ENCODE measurements at regions of chr12 and their contacts with region 1.

Region 1: DNA sequence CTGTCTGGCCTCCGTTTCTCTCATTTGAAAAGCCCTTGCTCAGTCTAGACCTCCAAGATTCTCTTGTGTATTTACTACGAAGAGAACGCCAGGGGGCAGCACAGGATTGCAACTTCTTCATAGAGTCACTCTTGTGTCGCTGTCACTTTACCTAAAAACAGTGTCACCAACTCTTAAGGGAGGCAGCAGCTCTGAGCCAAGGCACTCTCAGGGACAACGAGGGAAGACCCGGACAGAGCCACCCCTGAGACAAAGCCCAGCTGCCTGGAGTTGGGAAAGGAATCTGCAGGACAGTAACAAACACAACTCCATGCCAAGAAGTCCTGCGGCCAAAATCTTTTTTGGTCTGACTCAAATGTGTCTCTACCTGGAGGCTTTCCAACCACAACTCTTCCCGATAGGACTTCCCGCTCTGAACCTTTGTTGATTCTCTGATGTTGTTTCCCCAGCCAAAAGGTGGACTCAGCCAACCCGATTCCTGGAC is 9.6 kb upstream of the RPAP3 start:
- DNase-seq: peak; percentile 58
- H3K4me3 Mint-ChIP-seq: no peak overlapping the region
- H3K27ac Mint-ChIP-seq: no peak overlapping the region
- H3K4me1 Mint-ChIP-seq: peaks cover 29% of the 10 kb centered on the region
- H3K27me3 Mint-ChIP-seq: peaks cover 2% of the 10 kb centered on the region

Region 2: GRCh38 chr12:47679785-47680184 is 35.6 kb before region 1 on chr12:
- intact Hi-C with region 1: no loop called
- DNase-seq: no peak
- H3K4me3 Mint-ChIP-seq: no peak overlapping the region
- H3K27ac Mint-ChIP-seq: no peak overlapping the region
- H3K4me1 Mint-ChIP-seq: peaks cover 18% of the 10 kb centered on the region
- H3K27me3 Mint-ChIP-seq: no peaks in the 10 kb centered on the region

Region 3: GRCh38 chr12:47742253-47742825 is 26.9 kb after region 1 on chr12:
- intact Hi-C with region 1: loop called (anchors 1 kb)
- DNase-seq: peak; percentile 61
- H3K4me3 Mint-ChIP-seq: no peak overlapping the region
- H3K27ac Mint-ChIP-seq: no peak overlapping the region
- H3K4me1 Mint-ChIP-seq: peaks cover 6% of the 10 kb centered on the region
- H3K27me3 Mint-ChIP-seq: peaks cover 17% of the 10 kb centered on the region

Region 4: DNA sequence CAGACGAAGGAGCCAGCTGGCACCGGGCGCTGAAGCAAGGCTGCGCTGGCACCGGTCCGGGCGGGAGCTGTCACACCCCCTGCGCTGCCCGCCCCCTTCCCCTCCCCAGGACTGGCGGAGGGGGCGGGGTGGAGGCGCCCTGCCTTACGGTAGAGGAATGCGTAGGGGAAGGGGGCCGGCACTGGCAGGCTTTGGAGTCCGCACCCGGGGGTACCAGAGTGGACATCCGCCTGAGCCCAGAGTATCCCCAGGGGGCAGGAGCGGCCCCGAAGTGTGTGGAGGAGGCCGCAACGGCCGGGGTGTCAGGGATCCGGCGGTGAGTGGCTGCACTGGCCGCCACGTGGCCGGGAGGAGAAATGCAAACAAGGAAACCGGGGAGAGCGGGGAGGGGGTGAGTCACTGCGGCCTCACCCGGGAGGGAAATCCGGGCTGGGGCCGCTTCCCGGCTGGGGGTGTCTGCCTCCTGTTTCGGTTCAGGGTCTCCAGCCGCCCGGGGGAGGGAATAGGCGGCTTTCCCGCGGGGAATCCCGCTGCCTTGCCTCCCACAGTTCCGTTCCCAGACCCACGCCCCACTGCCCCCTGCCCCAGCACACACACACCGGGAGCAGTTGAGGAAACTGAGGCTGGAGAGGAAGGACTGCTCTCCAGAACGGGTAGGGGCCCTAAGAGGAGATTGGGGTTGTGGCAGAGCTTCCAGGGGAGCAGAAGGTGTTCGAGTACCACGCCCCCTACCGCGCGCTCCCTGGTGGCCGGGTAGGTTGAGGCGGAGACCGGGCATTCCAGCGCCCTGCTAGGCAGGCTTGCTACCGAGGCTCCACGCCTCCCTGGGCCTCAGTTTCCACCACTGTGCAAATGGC is 43.6 kb after region 1 on chr12 and contains the start of gene RAPGEF3:
- intact Hi-C with region 1: loop called (anchors 1 kb)
- DNase-seq: peak; percentile 58
- H3K4me3 Mint-ChIP-seq: peak within 1 kb of the TSS; percentile 75
- H3K27ac Mint-ChIP-seq: no peak within 1 kb of the TSS
- H3K4me1 Mint-ChIP-seq: peaks cover 56% of the 10 kb centered on the region
- H3K27me3 Mint-ChIP-seq: peaks cover 4% of the 10 kb centered on the region
- total RNA-seq, gene RAPGEF3: 4.7 and 6.5 TPM in 2 replicates

Region 5: GRCh38 chr12:47767216-47767724 is 51.8 kb after region 1 on chr12:
- intact Hi-C with region 1: loop called (anchors 1 kb)
- DNase-seq: peak; percentile 53
- H3K4me3 Mint-ChIP-seq: no peak overlapping the region
- H3K27ac Mint-ChIP-seq: no peak overlapping the region
- H3K4me1 Mint-ChIP-seq: peaks cover 3% of the 10 kb centered on the region
- H3K27me3 Mint-ChIP-seq: peaks cover 3% of the 10 kb centered on the region

Region 6: GRCh38 chr12:47779301-47779942 is 64.0 kb after region 1 on chr12:
- intact Hi-C with region 1: loop called (anchors 1 kb)
- DNase-seq: peak; percentile 84
- H3K4me3 Mint-ChIP-seq: no peak overlapping the region
- H3K27ac Mint-ChIP-seq: peak overlapping the region; percentile 89
- H3K4me1 Mint-ChIP-seq: peaks cover 50% of the 10 kb centered on the region
- H3K27me3 Mint-ChIP-seq: no peaks in the 10 kb centered on the region

Region 7: GRCh38 chr12:47837190-47838171 is 122.0 kb after region 1 on chr12:
- intact Hi-C with region 1: loop called (anchors 1 kb)
- DNase-seq: peak; percentile 41
- H3K4me3 Mint-ChIP-seq: no peak overlapping the region
- H3K27ac Mint-ChIP-seq: peak overlapping the region; percentile 67
- H3K4me1 Mint-ChIP-seq: peaks cover 84% of the 10 kb centered on the region
- H3K27me3 Mint-ChIP-seq: no peaks in the 10 kb centered on the region

Region 8: DNA sequence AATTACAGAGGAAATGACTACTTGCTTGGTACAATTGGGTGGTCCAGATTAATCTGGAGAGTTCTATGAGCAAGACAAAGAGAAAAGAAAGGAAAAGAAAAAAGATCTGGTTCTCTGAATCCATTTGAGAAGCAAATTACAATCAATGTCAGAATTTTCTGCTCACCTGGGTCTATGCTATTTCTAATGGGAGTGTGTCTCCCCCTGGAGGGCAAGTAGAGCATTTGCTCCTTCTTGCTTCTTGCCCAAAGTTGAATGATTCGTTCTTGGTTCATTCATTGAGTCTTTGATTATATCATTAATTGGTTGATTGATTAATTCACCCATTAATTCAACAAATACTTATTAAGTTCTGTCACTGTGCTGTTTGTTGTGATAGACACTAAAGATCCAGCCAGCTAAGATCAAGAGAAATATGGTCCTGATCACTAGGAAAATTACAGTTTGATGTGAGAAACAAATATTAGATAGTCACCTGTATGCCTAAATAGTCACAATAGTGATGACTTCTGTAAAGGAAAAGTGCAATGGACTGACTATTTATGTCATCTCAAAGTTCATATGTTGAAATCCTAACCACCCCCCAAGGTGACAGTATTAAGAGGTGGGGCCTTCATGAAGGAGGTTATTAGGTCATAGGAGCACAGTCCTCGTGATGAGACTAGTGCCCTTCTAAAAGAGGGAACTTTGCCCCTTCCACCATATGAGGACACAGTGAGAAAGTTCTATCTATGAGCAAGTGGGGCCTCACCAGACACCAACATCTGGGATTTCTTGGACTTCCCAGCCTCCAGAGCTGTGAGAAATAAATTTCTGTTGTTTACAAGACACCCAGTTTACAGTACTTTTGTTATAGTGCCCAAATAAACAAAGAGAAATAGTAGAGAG is 449.9 kb after region 1 on chr12:
- intact Hi-C with region 1: loop called (anchors 1 kb)
- DNase-seq: peak; percentile 34
- H3K4me3 Mint-ChIP-seq: no peak overlapping the region
- H3K27ac Mint-ChIP-seq: no peak overlapping the region
- H3K4me1 Mint-ChIP-seq: peaks cover 6% of the 10 kb centered on the region
- H3K27me3 Mint-ChIP-seq: peaks cover 23% of the 10 kb centered on the region

Region 9: DNA sequence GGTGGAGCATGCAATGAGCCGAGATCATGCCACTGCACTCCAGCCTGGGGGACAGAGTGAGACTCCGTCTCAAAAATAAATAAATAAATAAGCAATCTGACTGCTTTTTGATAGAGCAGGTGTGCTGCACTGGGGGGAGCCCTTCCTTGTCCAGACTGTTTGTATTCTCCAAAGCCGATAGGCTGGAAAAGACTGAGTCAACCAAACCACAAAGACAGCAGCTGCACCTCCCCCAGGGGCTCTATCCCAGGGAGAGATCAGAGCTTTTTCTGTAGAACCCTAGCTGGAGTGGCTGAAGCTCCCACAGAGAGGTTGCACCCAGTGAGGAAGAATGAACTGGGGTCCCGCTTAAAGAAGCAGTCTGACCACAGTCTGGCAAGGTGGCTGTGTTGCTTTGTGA is 900.2 kb after region 1 on chr12:
- intact Hi-C with region 1: no loop called
- DNase-seq: no peak
- H3K4me3 Mint-ChIP-seq: no peak overlapping the region
- H3K27ac Mint-ChIP-seq: no peak overlapping the region
- H3K4me1 Mint-ChIP-seq: peaks cover 7% of the 10 kb centered on the region
- H3K27me3 Mint-ChIP-seq: peaks cover 24% of the 10 kb centered on the region

Measured in activated T-helper 1 cell treated with anti-CD3 and anti-CD28 coated beads, Interleukin-12 subunit alpha, Interleukin-12 subunit beta, Interleukin-2, Interleukin-4 antibody, amounts not matched to agents 30 ng/mL and 10 ng/mL and 1 ng/mL, durations not matched to agents 14 hours and 24 hours and 36 hours (primary cell).